Natural killer cell (primary cell): ENCODE measurements at regions of chr18 and their contacts with region 1.

Region 1: GRCh38 chr18:12507007-12507406 is 99.3 kb downstream of the PRELID3A start:
- DNase-seq: no peak
- ATAC-seq: no peak
- H3K4me3 ChIP-seq: no peak overlapping the region
- H3K4me3 Mint-ChIP-seq: no peak overlapping the region
- H3K27ac ChIP-seq: no peak overlapping the region
- H3K27ac Mint-ChIP-seq: no peak overlapping the region
- H3K4me1 ChIP-seq: peaks cover 4% of the 10 kb centered on the region
- H3K4me1 Mint-ChIP-seq: peaks cover 6 to 12% of the 10 kb centered on the region in 2 donors
- H3K27me3 ChIP-seq: no peaks in the 10 kb centered on the region
- H3K27me3 Mint-ChIP-seq: no peaks in the 10 kb centered on the region
- CTCF ChIP-seq: no peak

Region 2: GRCh38 chr18:11808001-11808855 is 698.8 kb before region 1 on chr18:
- intact Hi-C with region 1: no loop called
- DNase-seq: no peak
- ATAC-seq: no peak
- H3K4me3 ChIP-seq: no peak overlapping the region
- H3K4me3 Mint-ChIP-seq: no peak overlapping the region
- H3K27ac ChIP-seq: no peak overlapping the region
- H3K27ac Mint-ChIP-seq: no peak overlapping the region
- H3K4me1 ChIP-seq: no peaks in the 10 kb centered on the region
- H3K4me1 Mint-ChIP-seq: peaks cover 10 to 13% of the 10 kb centered on the region in 2 donors
- H3K27me3 ChIP-seq: no peaks in the 10 kb centered on the region
- H3K27me3 Mint-ChIP-seq: no peaks in the 10 kb centered on the region
- CTCF ChIP-seq: no peak

Region 3: DNA sequence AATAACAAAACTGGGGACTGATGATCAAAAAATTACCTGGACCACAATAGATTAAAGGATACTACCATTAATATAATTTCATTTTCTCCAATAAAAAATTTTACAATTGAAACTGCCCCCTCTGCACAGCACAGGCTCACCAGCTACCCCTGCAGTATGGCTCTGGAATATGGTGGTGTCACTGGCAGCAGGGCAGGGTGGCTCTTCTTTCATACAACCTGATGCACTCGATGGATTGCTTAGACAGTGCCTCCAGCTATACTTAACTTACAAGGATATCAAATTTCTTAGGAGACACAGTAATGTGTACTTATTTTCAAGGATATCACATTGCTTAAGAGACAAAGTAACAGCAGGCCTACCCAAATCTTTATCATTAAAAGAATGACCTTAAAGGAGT is 24.7 kb after region 1 on chr18:
- intact Hi-C with region 1: loop called (anchors 1 kb)
- DNase-seq: no peak
- ATAC-seq: no peak
- H3K4me3 ChIP-seq: no peak overlapping the region
- H3K4me3 Mint-ChIP-seq: no peak overlapping the region
- H3K27ac ChIP-seq: no peak overlapping the region
- H3K27ac Mint-ChIP-seq: no peak overlapping the region
- H3K4me1 ChIP-seq: no peaks in the 10 kb centered on the region
- H3K4me1 Mint-ChIP-seq: no peaks in the 10 kb centered on the region
- H3K27me3 ChIP-seq: no peaks in the 10 kb centered on the region
- H3K27me3 Mint-ChIP-seq: peaks cover 0 to 4% of the 10 kb centered on the region in 2 donors
- CTCF ChIP-seq: no peak

Region 4: GRCh38 chr18:12657684-12658425 is 150.8 kb after region 1 on chr18 and contains the start of gene SPIRE1:
- intact Hi-C with region 1: no loop called
- DNase-seq: peak; percentile 29 to 67
- ATAC-seq: peak; percentile 71 to 78 (median 75)
- H3K4me3 ChIP-seq: peak within 1 kb of the TSS; percentile 37
- H3K4me3 Mint-ChIP-seq: peak within 1 kb of the TSS; percentile 93
- H3K27ac ChIP-seq: peak within 1 kb of the TSS; percentile 31
- H3K27ac Mint-ChIP-seq: peak within 1 kb of the TSS; percentile 49 to 75
- H3K4me1 ChIP-seq: peaks cover 7% of the 10 kb centered on the region
- H3K4me1 Mint-ChIP-seq: peaks cover 11 to 12% of the 10 kb centered on the region in 2 donors
- H3K27me3 ChIP-seq: no peaks in the 10 kb centered on the region
- H3K27me3 Mint-ChIP-seq: peaks cover 0 to 3% of the 10 kb centered on the region in 2 donors
- CTCF ChIP-seq: no peak
- total RNA-seq, gene SPIRE1: 4.8 to 6.7 (median 5.4) TPM